ENCODE measurements at regions of chr11 and their contacts with region 1.

Region 1: DNA sequence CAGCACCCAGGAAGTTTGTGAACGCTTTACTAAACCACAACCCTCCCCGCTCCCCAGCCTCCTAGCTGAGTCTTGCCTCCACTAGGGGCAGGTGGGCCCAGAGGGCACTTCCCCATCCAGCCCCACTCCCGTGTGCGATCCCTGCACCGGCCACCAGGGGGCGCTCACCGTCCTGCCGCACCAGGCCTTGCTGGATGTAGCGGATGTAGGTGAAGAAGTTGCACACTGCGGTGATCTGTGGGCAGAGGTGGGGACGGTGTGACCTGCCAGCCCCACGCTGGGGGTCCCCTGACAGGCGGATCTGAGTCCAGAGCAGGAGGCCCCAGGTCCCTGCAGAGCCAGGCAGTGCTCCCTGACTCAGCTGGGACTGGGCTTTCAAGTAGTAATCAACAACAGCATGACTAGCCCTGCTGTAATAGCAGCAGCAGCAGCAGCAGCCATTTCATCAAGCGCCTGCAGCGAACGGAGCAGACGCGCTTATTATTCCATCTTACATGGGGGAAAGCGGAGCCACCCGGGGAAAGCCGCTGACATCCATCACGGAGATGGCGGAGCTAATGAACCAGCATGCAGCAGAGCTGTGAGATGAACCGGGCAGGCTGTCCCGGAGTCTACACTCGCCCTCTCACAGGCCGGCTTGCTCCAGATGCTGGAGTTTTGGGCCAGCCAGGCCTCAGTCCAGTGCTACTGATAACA is 7.9 kb upstream of the FADS3 start:
- DNase-seq: peak; percentile 74 to 90 (median 86)
- H3K4me3 ChIP-seq: no peak overlapping the region
- H3K27ac ChIP-seq: peak overlapping the region; percentile 17 to 57
- H3K4me1 ChIP-seq: peaks cover 3% of the 10 kb centered on the region
- H3K27me3 ChIP-seq: no peaks in the 10 kb centered on the region
- CTCF ChIP-seq: peak; percentile 96 to 99 (median 99)
- EP300 ChIP-seq: no peak
- POLR2A ChIP-seq: no peak

Region 2: DNA sequence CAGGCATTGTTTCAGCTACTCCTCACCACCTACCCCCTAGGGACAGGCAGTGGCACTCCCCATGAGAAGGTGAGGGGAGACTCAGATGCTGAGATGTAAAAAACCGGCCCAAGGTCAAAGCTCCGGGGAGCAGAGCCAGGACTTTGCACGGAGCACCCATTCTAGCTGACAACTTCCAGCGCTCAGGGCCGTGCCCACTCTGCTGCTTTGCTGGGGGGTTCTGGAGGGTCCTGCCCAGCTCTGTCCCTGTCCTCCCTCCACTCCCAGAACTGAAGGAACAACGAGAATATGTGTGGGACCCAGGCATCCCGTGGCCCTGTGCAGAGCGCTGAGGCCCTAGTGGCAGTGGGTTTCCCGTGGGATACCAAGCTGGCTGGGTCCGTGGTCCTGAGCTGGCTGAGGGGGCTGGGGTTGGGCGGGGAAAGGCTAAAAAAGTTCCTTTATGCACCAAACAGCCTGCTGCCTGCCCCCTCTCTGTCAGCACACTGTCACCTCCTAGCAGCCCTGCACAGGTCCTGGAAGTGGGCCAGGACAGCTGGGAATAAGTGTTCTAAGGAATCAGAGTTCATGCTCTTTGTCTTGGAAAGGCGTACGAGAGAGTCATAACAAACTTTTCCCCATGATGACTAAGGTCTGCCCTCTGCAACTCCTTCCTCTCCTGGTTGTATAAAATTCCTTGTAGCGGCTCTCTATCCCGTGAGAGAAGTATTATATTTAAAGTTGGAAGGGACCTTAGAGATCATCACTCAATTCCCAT is 1112.3 kb before region 1 on chr11:
- intact Hi-C with region 1: no loop called
- DNase-seq: peak; percentile 69 to 90 (median 82)
- H3K4me3 ChIP-seq: no peak overlapping the region
- H3K27ac ChIP-seq: no peak overlapping the region
- H3K4me1 ChIP-seq: peaks cover 6% of the 10 kb centered on the region
- H3K27me3 ChIP-seq: no peaks in the 10 kb centered on the region
- CTCF ChIP-seq: no peak
- EP300 ChIP-seq: no peak
- POLR2A ChIP-seq: no peak

Region 3: GRCh38 chr11:61814958-61815789 is 84.1 kb before region 1 on chr11:
- intact Hi-C with region 1: loop called in 1 of 4 experiments (anchors 5 kb)
- DNase-seq: peak; percentile 97 to 98 (median 97)
- H3K4me3 ChIP-seq: peak overlapping the region; percentile 73
- H3K27ac ChIP-seq: peak overlapping the region; percentile 95 to 98
- H3K4me1 ChIP-seq: no peaks in the 10 kb centered on the region
- H3K27me3 ChIP-seq: no peaks in the 10 kb centered on the region
- CTCF ChIP-seq: peak in 1 of 3 donors; percentile 21
- EP300 ChIP-seq: peak; percentile 25
- POLR2A ChIP-seq: peak; percentile 99

Region 4: GRCh38 chr11:61947486-61948210 is 48.4 kb after region 1 on chr11:
- intact Hi-C with region 1: loop called (anchors 1 to 2 kb)
- DNase-seq: peak; percentile 93 to 95 (median 93)
- H3K4me3 ChIP-seq: no peak overlapping the region
- H3K27ac ChIP-seq: peak overlapping the region in 1 of 2 donors; percentile 1
- H3K4me1 ChIP-seq: peaks cover 12% of the 10 kb centered on the region
- H3K27me3 ChIP-seq: no peaks in the 10 kb centered on the region
- CTCF ChIP-seq: peak; percentile 93 to 98 (median 97)
- EP300 ChIP-seq: no peak
- POLR2A ChIP-seq: peak; percentile 36

Measured in ovary (tissue), 10 donors.